H1 (cell line): ENCODE measurements at regions of chr10 and their contacts with region 1.

Region 1: DNA sequence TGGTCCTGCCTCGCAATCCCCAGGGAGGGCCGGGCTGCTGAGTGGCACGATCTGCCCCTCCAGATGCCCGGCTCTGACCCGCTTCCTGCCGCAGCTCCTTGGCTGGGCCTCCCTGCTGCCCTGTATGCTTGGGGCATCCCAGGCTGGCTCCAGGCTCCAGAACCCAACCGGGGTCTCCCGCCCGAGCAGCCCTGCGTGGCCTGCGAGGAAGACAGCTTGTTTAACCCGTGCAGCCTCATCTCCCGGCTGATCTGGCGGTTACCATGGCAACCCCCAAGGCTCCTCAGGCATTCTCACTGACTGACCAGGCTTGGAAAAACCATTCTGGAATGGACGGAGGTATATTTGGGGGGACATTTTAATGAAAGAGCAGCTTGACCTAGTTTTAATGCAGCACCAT is 232.4 kb upstream of the MYO3A start:
- DNase-seq: no peak
- H3K4me3 ChIP-seq: no peak overlapping the region
- H3K27ac ChIP-seq: no peak overlapping the region
- H3K4me1 ChIP-seq: peaks cover 0 to 3% (median 1%) of the 10 kb centered on the region in 4 experiments; a peak in 2 of 7 replicates
- H3K27me3 ChIP-seq: no peaks in the 10 kb centered on the region
- CTCF ChIP-seq: no peak
- EP300 ChIP-seq: no peak
- POLR2A ChIP-seq: no peak
- RAD21 ChIP-seq: no peak

Region 2: DNA sequence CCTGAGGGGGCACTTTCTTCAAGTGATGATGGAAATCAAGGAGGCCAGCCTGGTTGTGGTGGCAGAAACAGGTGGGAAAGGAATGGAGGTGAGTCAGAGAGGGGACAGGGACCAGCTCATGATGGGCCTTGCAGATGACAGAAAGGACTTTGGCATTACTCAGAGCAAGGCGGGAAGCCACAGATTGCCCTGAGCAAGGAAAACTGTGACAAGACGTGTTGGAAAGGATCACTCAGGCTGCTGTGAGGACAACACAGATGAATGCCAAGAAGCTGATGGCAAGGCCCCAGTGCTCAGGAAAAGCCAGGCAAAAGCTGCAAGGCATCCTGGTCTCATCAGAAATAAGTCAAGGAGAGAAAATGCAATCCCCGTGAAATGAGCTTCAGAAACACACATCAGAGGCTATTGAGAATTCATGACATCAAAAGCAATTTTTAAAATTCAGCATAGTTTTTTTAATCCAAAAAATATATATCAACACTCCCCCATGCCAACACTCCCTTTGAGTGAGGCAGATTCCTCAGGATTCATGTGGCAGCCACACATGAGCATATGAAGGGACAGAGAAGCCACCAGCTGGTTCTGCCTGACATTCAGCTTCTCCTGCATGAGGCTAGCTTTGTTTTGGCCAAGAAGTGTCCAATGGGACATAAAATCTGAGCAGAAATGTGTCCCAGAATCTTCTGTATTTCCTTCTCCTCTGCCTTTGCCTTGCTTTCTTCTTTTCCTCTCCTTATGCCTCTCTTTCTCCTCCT is 12.1 kb before region 1 on chr10:
- CTCF ChIA-PET with region 1: interaction called, 23 read pairs
- POLR2A ChIA-PET with region 1: no interaction called
- DNase-seq: no peak
- H3K4me3 ChIP-seq: no peak overlapping the region
- H3K27ac ChIP-seq: no peak overlapping the region
- H3K4me1 ChIP-seq: no peaks in the 10 kb centered on the region
- H3K27me3 ChIP-seq: no peaks in the 10 kb centered on the region
- CTCF ChIP-seq: no peak
- EP300 ChIP-seq: no peak
- POLR2A ChIP-seq: no peak
- RAD21 ChIP-seq: no peak

Region 3: DNA sequence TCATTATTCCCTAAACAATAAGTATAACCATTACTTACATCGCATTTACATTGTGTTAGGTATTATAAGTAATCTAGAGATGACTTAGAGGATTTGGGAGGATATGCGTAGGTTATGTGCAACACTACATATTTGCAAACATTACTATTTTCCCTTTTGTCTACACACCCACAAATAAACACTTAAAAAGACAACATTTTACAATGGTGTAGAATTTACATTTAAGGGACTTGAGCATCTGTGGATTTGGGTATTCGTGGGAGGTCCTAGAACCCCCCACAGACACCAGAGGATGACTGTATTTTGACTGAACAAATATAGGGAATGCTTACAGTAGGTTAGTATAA is 12.2 kb after region 1 on chr10:
- CTCF ChIA-PET with region 1: interaction called, 16 read pairs
- POLR2A ChIA-PET with region 1: no interaction called
- DNase-seq: no peak
- H3K4me3 ChIP-seq: no peak overlapping the region
- H3K27ac ChIP-seq: no peak overlapping the region
- H3K4me1 ChIP-seq: no peaks in the 10 kb centered on the region
- H3K27me3 ChIP-seq: no peaks in the 10 kb centered on the region
- CTCF ChIP-seq: no peak
- EP300 ChIP-seq: no peak
- POLR2A ChIP-seq: no peak
- RAD21 ChIP-seq: no peak

Region 4: DNA sequence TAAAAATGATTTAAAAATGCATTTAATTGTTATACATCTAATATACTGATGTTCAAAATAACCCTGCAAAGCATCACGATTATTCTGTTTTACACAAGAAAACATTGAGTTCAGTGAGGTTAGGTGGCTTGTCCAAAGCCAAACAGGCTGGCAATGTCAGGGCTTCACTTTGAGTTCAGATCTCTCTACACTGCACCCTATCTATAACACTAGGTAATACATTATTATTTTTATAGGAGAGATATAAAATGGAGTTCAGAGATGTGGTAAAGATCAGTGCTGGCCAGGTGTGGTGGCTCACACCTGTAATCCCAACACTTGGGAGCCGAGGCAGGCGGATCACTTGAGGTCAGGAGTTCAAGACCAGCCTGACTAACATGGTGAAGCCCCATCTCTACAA is 66.5 kb after region 1 on chr10:
- CTCF ChIA-PET with region 1: no interaction called
- POLR2A ChIA-PET with region 1: no interaction called
- DNase-seq: no peak
- H3K4me3 ChIP-seq: no peak overlapping the region
- H3K27ac ChIP-seq: no peak overlapping the region
- H3K4me1 ChIP-seq: peaks cover 0 to 19% (median 11%) of the 10 kb centered on the region in 4 experiments; a peak in 4 of 7 replicates
- H3K27me3 ChIP-seq: peaks cover 0 to 4% (median 0%) of the 10 kb centered on the region in 4 experiments; a peak in 1 of 7 replicates
- CTCF ChIP-seq: no peak; a peak in 1 of 4 replicates
- EP300 ChIP-seq: no peak
- POLR2A ChIP-seq: no peak
- RAD21 ChIP-seq: no peak